AG04450 (cell line): ENCODE measurements at regions of chr16 and their contacts with region 1.

Region 1: GRCh38 chr16:84819644-84820324 is at the start of gene CRISPLD2:
- DNase-seq: peak; percentile 63
- H3K4me3 ChIP-seq: peak within 1 kb of the TSS; percentile 90
- H3K27ac ChIP-seq: peak within 1 kb of the TSS; percentile 31
- H3K27me3 ChIP-seq: no peaks in the 10 kb centered on the region
- CTCF ChIP-seq: no peak
- polyA plus RNA-seq, gene CRISPLD2: 91.5 and 103 TPM in 2 replicates

Region 2: GRCh38 chr16:84765616-84766580 is 53.9 kb before region 1 on chr16:
- CTCF ChIA-PET with region 1: no interaction called
- POLR2A ChIA-PET with region 1: interaction called, 33 read pairs
- DNase-seq: no peak
- H3K4me3 ChIP-seq: no peak overlapping the region
- H3K27ac ChIP-seq: peak overlapping the region; percentile 87
- H3K27me3 ChIP-seq: no peaks in the 10 kb centered on the region
- CTCF ChIP-seq: no peak

Region 3: DNA sequence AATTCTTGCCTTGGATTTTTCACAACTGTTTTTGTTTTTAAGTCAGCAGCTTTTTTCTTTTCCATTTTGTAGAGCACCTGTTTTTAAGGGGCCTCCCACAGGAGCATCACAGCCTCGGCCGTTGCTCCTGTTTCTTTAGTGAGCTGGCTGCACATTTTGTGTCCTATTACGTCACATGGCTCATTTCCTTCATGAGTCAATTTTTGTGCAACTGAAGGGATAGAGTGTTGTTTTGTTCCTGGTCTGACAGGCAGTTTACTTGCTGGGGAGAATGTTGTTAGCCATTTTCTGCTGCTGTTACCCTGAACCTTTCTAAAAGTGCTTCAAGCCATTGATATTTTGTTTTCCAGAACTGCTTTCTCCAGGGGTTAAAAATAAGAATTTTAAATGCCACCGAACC is 45.0 kb before region 1 on chr16:
- CTCF ChIA-PET with region 1: no interaction called
- POLR2A ChIA-PET with region 1: interaction called, 11 read pairs
- DNase-seq: peak; percentile 73
- H3K4me3 ChIP-seq: no peak overlapping the region
- H3K27ac ChIP-seq: peak overlapping the region; percentile 52
- H3K27me3 ChIP-seq: no peaks in the 10 kb centered on the region
- CTCF ChIP-seq: no peak

Region 4: DNA sequence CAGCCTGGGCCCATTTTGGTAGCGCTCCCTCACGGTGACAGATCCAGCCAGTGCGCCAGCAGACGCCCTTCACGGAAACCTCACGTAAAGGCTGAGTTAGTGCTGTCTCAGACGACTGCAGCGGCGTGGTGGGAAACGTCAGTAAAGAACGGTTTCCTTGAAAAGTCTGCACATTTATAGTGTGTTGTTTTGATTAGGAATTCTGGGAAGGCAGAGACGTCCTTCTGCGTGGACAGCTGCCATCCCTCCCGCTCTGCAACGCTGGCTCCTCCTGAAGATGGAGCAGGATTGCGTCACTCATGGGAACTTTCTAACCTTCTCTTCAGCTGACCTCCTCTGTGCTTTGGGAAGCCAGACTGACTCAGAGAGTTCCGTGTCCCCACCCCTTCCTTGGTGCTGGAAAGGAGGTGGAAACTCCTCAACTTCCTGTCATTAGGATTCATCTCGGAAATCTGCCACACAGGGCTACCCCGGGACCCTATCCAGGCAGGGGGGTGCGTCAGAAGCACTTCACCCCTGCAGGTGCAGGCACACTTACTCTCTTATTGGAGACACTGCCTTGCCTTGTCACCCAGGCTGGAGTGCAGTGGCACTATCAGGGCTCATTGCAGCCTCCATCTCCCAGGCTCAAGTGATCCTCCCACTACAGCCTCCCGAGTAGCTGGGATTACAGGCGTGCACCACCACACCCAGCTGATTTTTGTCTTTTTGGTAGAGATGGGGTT is 24.3 kb before region 1 on chr16:
- CTCF ChIA-PET with region 1: no interaction called
- POLR2A ChIA-PET with region 1: interaction called, 38 read pairs
- DNase-seq: peak; percentile 96
- H3K4me3 ChIP-seq: peak overlapping the region; percentile 39
- H3K27ac ChIP-seq: peak overlapping the region; percentile 97
- H3K27me3 ChIP-seq: no peaks in the 10 kb centered on the region
- CTCF ChIP-seq: no peak

Region 5: DNA sequence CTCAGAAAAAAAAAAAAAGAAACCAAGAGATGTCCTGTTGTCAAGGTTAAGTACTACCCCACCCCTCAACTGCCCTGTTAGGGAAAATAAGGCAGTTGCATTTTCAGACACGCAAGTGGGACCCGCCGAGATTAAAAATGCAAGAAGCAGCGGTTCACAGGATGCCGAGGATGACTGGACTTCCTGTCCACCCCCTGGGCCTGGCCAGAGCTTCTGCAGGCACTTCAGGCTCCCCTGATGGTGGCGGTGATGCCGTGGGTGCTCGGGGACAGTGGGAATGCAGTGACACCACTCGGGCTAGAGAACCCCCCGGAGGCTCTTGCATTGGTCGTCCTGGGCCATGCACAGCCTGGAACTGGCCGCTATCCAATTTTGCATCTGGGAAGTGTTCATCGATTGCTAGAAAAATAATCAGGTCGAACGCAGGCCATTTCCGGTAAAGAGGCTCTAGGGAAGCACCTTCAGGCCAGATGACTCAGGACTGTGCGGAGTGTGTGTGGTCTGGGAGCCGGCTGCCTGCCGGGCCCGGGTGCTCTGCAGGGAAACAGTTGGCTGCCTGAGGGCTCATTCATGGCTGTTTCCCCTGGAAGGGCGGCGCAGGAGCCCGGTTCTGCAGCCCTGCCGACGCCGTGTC is 13.4 kb before region 1 on chr16:
- CTCF ChIA-PET with region 1: no interaction called
- POLR2A ChIA-PET with region 1: interaction called, 12 read pairs
- DNase-seq: peak; percentile 71
- H3K4me3 ChIP-seq: no peak overlapping the region
- H3K27ac ChIP-seq: peak overlapping the region; percentile 78
- H3K27me3 ChIP-seq: no peaks in the 10 kb centered on the region
- CTCF ChIP-seq: no peak

Region 6: DNA sequence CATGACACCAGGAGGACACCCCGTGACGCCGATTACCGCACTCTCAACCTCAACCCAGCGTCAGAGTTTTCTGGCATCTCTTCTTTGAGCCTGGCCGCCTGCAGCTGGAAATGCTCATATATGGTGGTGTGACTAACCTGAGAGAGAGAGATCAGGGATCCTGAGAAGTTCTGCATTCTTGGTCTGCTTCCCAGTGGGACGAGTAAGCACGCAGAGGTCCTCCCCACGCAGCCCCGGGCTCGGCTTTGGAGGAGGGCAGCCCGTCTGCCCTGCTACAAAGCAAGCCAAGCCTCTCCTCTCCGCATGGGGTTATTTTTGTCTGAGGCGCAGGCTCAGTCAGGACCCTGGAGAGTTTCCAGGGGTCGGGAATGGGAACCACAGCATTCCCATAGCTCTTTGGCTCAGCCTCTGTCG is 16.5 kb after region 1 on chr16:
- CTCF ChIA-PET with region 1: interaction called, 3 read pairs
- POLR2A ChIA-PET with region 1: interaction called, 70 read pairs
- DNase-seq: peak; percentile 100
- H3K4me3 ChIP-seq: no peak overlapping the region
- H3K27ac ChIP-seq: peak overlapping the region; percentile 96
- H3K27me3 ChIP-seq: no peaks in the 10 kb centered on the region
- CTCF ChIP-seq: no peak

Region 7: GRCh38 chr16:84851192-84852127 is 31.7 kb after region 1 on chr16:
- CTCF ChIA-PET with region 1: no interaction called
- POLR2A ChIA-PET with region 1: interaction called, 11 read pairs
- DNase-seq: peak; percentile 81
- H3K4me3 ChIP-seq: no peak overlapping the region
- H3K27ac ChIP-seq: peak overlapping the region; percentile 78
- H3K27me3 ChIP-seq: no peaks in the 10 kb centered on the region
- CTCF ChIP-seq: no peak

Region 8: DNA sequence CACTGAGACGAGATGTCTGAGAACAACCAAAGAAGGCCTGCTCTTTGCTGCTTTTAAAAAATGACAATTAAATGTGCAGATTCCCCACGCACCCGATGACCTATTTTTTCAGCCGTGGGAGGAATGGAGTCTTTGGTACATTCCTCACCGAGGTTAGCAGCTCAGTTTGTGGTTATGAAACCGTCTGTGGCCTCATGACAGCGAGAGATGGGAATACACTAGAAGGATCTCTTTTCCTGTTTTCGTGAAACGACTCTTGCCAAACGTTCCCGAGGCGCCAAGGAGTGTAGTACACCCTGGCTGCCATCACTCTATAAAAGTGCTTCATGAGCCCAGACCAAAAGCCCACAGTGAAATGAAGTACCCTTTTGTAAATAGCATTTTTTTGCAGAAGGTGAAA is 87.8 kb after region 1 on chr16:
- CTCF ChIA-PET with region 1: no interaction called
- POLR2A ChIA-PET with region 1: no interaction called
- DNase-seq: no peak
- H3K4me3 ChIP-seq: no peak overlapping the region
- H3K27ac ChIP-seq: no peak overlapping the region
- H3K27me3 ChIP-seq: no peaks in the 10 kb centered on the region
- CTCF ChIP-seq: no peak